ENCODE measurements at regions of chr1 and their contacts with region 1.

Region 1: DNA sequence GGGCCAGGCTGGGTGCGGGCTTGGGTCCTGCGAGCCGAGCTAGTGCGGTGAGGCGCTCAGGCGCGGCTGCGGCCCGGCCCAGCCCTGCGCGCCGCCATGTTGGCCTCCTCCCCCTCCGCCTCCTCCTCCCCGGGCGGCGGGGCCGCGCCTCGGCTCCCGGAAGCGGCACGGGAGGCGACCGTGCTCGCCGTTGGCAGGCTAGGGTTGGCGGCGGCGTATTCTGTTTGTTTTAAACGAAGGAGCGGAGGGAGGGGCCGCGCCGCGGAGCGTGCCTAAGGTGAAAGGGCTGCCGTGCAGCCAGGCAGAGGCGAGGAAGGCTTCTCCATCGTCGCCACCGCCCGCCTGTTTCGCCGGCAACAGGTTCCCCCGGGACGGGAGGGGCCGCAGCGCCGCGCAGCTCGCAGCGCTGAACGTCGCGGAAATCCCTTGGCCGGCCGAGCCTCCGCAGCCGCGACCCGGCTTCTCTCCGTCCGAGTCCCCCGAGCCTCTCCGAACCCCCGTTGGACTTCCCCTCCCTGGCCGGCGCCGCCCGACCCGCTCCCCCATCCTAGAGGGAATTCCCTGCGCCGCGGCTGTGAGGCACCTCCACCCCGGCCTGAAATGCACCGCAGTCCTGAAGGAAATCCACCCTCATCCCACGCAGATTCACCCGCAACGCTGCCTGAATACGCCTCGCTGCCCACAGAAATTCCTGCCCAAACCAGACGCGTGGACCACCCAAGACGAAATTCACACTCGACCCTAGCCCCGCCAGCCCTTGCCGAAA is at the start of gene USP24:
- DNase-seq: peak; percentile 77 to 84
- ATAC-seq: peak; percentile 92 to 96 (median 93)
- H3K4me3 ChIP-seq: peak within 1 kb of the TSS; percentile 70 to 96 (median 88)
- H3K27ac ChIP-seq: peak within 1 kb of the TSS; percentile 92 to 99 (median 98)
- H3K4me1 ChIP-seq: peaks cover 2 to 65% (median 58%) of the 10 kb centered on the region in 9 donors
- H3K27me3 ChIP-seq: no peaks in the 10 kb centered on the region
- CTCF ChIP-seq: no peak
- total RNA-seq, gene USP24: 31.4 to 49.7 (median 42.5) TPM

Region 2: DNA sequence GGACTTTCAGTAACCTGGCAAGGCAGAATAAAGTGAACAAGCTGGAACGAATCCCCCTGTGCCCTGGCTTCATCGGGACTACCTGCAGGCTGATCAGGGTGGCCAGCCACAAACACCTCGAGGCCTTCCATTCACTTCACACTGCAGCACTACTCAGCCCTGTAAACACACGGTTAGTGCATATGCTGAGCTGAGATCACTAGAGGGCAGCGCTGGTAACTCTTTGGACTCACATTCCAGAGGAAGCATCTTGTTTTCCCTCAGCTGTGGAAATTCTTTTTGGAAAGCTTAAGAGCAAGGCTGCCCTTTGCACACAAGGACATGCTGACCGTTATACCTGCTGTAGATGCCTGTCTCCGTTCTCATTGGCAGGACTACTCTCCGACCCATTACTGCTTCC is 144.0 kb before region 1 on chr1:
- intact Hi-C with region 1: no loop called
- DNase-seq: no peak
- ATAC-seq: peak; percentile 32 to 60 (median 46)
- H3K4me3 ChIP-seq: no peak overlapping the region
- H3K27ac ChIP-seq: peak overlapping the region in 4 of 10 donors; percentile 20 to 44 (median 34)
- H3K4me1 ChIP-seq: peaks cover 0 to 35% (median 16%) of the 10 kb centered on the region in 9 donors
- H3K27me3 ChIP-seq: no peaks in the 10 kb centered on the region
- CTCF ChIP-seq: peak in 5 of 9 donors; percentile 25 to 44 (median 41)

Region 3: GRCh38 chr1:55140546-55140983 is 74.9 kb before region 1 on chr1:
- intact Hi-C with region 1: loop called in 1 of 10 experiments (anchors 5 kb)
- DNase-seq: peak in 1 of 2 donors; percentile 88
- ATAC-seq: peak; percentile 82 to 97 (median 94)
- H3K4me3 ChIP-seq: no peak overlapping the region
- H3K27ac ChIP-seq: peak overlapping the region in 5 of 10 donors; percentile 5 to 50 (median 30)
- H3K4me1 ChIP-seq: peaks cover 0 to 21% (median 4%) of the 10 kb centered on the region in 9 donors
- H3K27me3 ChIP-seq: no peaks in the 10 kb centered on the region
- CTCF ChIP-seq: peak; percentile 58 to 94 (median 84)

Region 4: GRCh38 chr1:55155514-55155913 is 59.9 kb before region 1 on chr1:
- intact Hi-C with region 1: loop called in 3 of 10 experiments (anchors 5 to 10 kb)
- DNase-seq: peak; percentile 33 to 76
- ATAC-seq: peak; percentile 50 to 95 (median 89)
- H3K4me3 ChIP-seq: no peak overlapping the region
- H3K27ac ChIP-seq: no peak overlapping the region
- H3K4me1 ChIP-seq: peaks cover 0 to 21% (median 0%) of the 10 kb centered on the region in 9 donors
- H3K27me3 ChIP-seq: no peaks in the 10 kb centered on the region
- CTCF ChIP-seq: no peak

Region 5: DNA sequence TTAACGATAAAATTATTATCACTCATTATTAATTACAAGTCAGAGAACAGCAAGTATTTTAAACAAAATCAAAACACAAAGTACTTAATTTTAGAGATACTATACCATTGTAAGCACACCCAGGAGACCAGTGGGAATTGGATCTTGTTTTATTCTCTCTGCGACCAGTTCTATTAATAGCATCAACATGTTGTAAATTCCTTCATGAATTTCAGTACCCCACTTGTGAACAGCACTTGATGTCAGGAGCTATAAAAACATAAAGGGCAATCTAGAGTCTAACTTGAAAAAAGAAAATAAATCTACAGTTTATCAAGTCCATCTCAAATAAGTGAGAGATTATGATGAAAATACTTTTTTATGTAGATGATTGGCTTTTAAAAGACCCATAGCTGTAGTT is 43.2 kb before region 1 on chr1:
- intact Hi-C with region 1: loop called in 1 of 10 experiments (anchors 5 kb)
- DNase-seq: no peak
- ATAC-seq: peak in 5 of 8 donors; percentile 44 to 77 (median 68)
- H3K4me3 ChIP-seq: no peak overlapping the region
- H3K27ac ChIP-seq: peak overlapping the region in 4 of 10 donors; percentile 15 to 25 (median 20)
- H3K4me1 ChIP-seq: peaks cover 0 to 47% (median 7%) of the 10 kb centered on the region in 9 donors
- H3K27me3 ChIP-seq: no peaks in the 10 kb centered on the region
- CTCF ChIP-seq: no peak

Region 6: GRCh38 chr1:55257958-55258357 is 42.5 kb after region 1 on chr1:
- intact Hi-C with region 1: no loop called
- DNase-seq: no peak
- ATAC-seq: no peak
- H3K4me3 ChIP-seq: no peak overlapping the region
- H3K27ac ChIP-seq: no peak overlapping the region
- H3K4me1 ChIP-seq: peaks cover 0 to 7% (median 0%) of the 10 kb centered on the region in 9 donors
- H3K27me3 ChIP-seq: no peaks in the 10 kb centered on the region
- CTCF ChIP-seq: no peak

Region 7: GRCh38 chr1:55277377-55278130 is 62.1 kb after region 1 on chr1:
- intact Hi-C with region 1: loop called in 8 of 10 experiments (anchors 5 to 10 kb)
- DNase-seq: peak; percentile 77 to 79
- ATAC-seq: peak; percentile 87 to 94 (median 90)
- H3K4me3 ChIP-seq: no peak overlapping the region
- H3K27ac ChIP-seq: peak overlapping the region in 3 of 10 donors; percentile 0 to 58 (median 20)
- H3K4me1 ChIP-seq: peaks cover 0 to 27% (median 14%) of the 10 kb centered on the region in 9 donors
- H3K27me3 ChIP-seq: no peaks in the 10 kb centered on the region
- CTCF ChIP-seq: peak; percentile 82 to 95 (median 88)

Region 8: GRCh38 chr1:55288245-55288644 is 72.8 kb after region 1 on chr1:
- intact Hi-C with region 1: no loop called
- DNase-seq: peak in 1 of 2 donors; percentile 51
- ATAC-seq: peak in 6 of 8 donors; percentile 34 to 74 (median 49)
- H3K4me3 ChIP-seq: peak overlapping the region in 2 of 10 donors; percentile 19 to 24
- H3K27ac ChIP-seq: no peak overlapping the region
- H3K4me1 ChIP-seq: peaks cover 0 to 6% (median 0%) of the 10 kb centered on the region in 9 donors
- H3K27me3 ChIP-seq: no peaks in the 10 kb centered on the region
- CTCF ChIP-seq: no peak

Region 9: DNA sequence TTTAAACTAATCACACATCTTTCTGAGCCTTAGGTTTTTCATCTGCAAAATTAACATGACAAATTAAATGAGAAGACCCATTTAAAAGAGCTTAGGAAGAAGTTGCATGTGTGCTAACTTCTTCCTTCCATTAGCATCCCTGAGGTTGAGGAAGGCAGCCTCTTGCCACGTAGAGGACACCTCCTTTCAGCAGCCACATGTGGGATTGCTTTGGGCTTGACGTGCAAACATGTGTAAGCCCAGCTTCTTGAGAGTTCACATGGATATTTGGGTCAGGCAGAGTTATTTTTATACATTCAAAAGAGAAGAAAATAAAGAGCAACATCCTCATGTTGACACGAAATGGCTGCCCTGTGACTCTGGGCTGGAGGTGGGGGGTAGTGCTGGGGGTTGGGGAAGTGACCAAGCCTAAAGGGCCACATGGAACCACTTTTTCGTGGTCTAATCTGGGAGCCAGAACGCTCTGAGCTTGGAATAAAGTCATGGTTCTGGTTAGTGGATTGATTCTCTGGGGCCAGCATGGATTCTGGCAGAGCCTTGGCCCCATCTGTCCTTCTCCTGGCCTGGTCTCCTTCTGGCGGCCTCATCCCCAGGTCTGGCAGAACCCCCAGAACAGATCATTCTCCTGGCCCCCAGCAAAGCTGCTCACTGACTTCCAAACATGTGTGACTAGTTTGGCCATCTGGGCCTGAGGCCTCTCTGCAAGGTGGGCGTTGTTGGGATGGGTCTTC is 136.8 kb after region 1 on chr1:
- intact Hi-C with region 1: no loop called
- DNase-seq: peak in 1 of 2 donors; percentile 45
- ATAC-seq: peak; percentile 42 to 82 (median 64)
- H3K4me3 ChIP-seq: no peak overlapping the region
- H3K27ac ChIP-seq: peak overlapping the region in 6 of 10 donors; percentile 9 to 62 (median 42)
- H3K4me1 ChIP-seq: peaks cover 2 to 39% (median 10%) of the 10 kb centered on the region in 9 donors
- H3K27me3 ChIP-seq: no peaks in the 10 kb centered on the region
- CTCF ChIP-seq: no peak